ENCODE measurements at regions of chr7 and their contacts with region 1.

Region 1: DNA sequence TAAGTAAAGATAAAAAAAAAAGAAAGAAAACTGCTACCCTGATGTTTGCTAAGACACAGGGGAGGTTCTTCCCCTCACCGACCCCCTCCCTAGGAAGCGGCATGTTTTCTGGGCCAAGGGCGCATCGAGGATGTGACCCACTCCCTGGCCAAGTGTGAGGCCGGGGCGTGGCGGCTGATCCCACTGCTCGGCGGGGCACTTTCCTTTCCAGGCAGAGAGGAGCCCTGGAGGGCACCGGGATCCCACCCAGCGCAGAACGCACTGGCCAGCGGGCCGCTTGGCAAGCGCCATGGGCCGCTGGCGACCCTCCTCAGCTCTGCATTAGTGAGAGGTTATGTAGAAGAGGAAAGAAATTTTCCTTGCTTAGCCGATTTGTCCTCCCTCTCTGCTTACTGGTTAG is 93.4 kb downstream of the ZNF736 start:
- DNase-seq: no peak
- ATAC-seq: no peak
- H3K4me3 Mint-ChIP-seq: no peak overlapping the region
- H3K27ac Mint-ChIP-seq: no peak overlapping the region
- H3K4me1 Mint-ChIP-seq: no peaks in the 10 kb centered on the region
- H3K27me3 Mint-ChIP-seq: no peaks in the 10 kb centered on the region

Region 2: GRCh38 chr7:64366921-64367320 is 40.2 kb before region 1 on chr7:
- CTCF ChIA-PET with region 1: no interaction called
- POLR2A ChIA-PET with region 1: no interaction called
- intact Hi-C with region 1: loop called in 1 of 2 experiments (anchors 10 kb)
- DNase-seq: no peak
- ATAC-seq: no peak
- H3K4me3 Mint-ChIP-seq: no peak overlapping the region
- H3K27ac Mint-ChIP-seq: no peak overlapping the region
- H3K4me1 Mint-ChIP-seq: no peaks in the 10 kb centered on the region
- H3K27me3 Mint-ChIP-seq: no peaks in the 10 kb centered on the region